ENCODE measurements at regions of chr10 and their contacts with region 1.

Region 1: DNA sequence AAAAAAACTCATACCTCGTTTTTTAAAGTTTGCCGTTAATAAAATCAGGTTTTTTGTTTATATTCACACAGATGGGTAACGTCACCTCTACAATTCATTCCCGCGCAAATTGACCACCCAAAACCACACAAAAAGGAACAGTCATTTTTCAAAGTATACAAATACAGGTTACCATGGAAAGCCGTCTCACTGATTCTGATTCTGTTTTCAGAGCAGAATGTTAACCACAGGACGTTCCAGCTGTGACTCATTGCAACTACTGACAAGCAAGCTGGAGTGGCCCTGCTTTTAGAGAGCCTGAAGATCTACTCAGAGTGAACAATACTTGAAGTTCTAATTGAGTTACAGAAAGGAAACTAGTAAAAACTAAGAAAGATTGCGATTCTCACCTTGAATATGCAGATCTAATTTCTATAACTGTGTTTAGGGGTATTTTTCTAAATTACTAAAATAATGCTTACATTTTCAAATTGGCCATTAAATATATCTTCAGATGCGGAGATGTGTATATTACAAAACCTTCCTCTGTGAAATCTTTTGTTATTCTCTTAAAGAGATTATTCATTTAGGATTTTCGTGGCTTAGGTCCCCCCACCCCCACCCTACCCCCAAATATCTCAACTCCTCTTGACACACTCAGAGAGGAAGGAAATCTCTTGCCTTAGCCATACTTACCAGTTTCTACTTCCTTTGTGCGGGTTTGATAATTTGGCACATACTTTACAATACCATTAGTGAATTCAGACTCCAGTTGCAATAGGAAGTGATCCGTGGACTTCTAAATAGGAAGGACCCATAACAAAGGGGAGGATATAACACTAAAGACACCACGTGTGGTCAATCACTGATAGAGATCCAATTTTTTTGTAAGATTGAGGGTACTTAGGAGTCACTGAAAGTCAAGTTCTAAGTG is 106.0 kb downstream of the CUBN start:
- DNase-seq: peak in 8 of 9 donors; percentile 60 to 89 (median 78)
- ATAC-seq: peak; percentile 86
- H3K4me3 ChIP-seq: no peak overlapping the region
- H3K4me3 Mint-ChIP-seq: peak overlapping the region; percentile 5 to 89 (median 64)
- H3K27ac ChIP-seq: peak overlapping the region; percentile 82
- H3K27ac Mint-ChIP-seq: peak overlapping the region; percentile 74 to 99 (median 91)
- H3K4me1 ChIP-seq: peaks cover 46 to 59% of the 10 kb centered on the region in 2 donors
- H3K4me1 Mint-ChIP-seq: peaks cover 32 to 72% (median 67%) of the 10 kb centered on the region in 7 donors
- H3K27me3 ChIP-seq: no peaks in the 10 kb centered on the region
- H3K27me3 Mint-ChIP-seq: peaks cover 0 to 9% (median 0%) of the 10 kb centered on the region in 5 donors

Region 2: DNA sequence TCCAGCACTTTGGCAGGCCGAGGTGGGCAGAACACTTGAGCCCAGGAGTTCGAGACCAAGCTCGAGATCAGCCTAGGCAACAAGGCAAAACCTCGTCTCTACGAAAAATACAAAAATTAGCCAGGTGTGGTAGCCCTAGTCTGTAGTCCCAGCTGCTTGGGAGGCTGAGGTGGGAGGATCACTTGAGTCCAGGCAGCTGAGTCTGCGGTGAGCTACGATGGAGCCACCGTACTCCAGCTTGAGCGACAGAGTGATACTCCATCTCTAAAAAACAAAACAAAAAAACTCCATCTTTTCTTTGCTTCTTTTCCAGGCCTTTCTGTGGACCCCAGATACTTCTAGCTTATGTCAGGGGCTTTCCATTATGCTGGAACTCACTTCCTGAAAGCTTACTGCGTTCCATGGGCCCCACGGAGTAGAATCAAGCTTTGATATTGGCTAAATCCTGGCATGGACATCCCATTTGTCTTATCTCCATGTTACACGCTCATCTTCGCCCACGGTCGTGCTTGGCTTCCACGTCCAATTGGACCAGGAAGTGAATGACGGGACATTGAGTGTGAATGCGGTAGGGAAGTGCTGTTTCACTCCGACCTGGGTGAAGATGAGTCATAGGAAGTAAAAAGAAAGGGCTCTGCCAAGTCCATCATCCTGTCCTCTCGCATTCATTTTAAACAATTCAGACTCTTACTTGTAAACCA is 1698.2 kb before region 1 on chr10:
- CTCF ChIA-PET with region 1: no interaction called
- POLR2A ChIA-PET with region 1: no interaction called
- intact Hi-C with region 1: no loop called
- DNase-seq: no peak
- ATAC-seq: no peak
- H3K4me3 ChIP-seq: no peak overlapping the region
- H3K4me3 Mint-ChIP-seq: no peak overlapping the region
- H3K27ac ChIP-seq: no peak overlapping the region
- H3K27ac Mint-ChIP-seq: no peak overlapping the region
- H3K4me1 ChIP-seq: no peaks in the 10 kb centered on the region
- H3K4me1 Mint-ChIP-seq: peaks cover 0 to 6% (median 0%) of the 10 kb centered on the region in 7 donors
- H3K27me3 ChIP-seq: no peaks in the 10 kb centered on the region
- H3K27me3 Mint-ChIP-seq: peaks cover 0 to 6% (median 0%) of the 10 kb centered on the region in 5 donors

Region 3: GRCh38 chr10:16904639-16905061 is 119.0 kb before region 1 on chr10:
- CTCF ChIA-PET with region 1: no interaction called
- POLR2A ChIA-PET with region 1: no interaction called
- intact Hi-C with region 1: loop called in 1 of 2 experiments (anchors 2 kb)
- DNase-seq: no peak
- ATAC-seq: no peak
- H3K4me3 ChIP-seq: no peak overlapping the region
- H3K4me3 Mint-ChIP-seq: no peak overlapping the region
- H3K27ac ChIP-seq: no peak overlapping the region
- H3K27ac Mint-ChIP-seq: no peak overlapping the region
- H3K4me1 ChIP-seq: no peaks in the 10 kb centered on the region
- H3K4me1 Mint-ChIP-seq: peaks cover 0 to 7% (median 4%) of the 10 kb centered on the region in 7 donors
- H3K27me3 ChIP-seq: no peaks in the 10 kb centered on the region
- H3K27me3 Mint-ChIP-seq: peaks cover 0 to 7% (median 0%) of the 10 kb centered on the region in 5 donors

Region 4: DNA sequence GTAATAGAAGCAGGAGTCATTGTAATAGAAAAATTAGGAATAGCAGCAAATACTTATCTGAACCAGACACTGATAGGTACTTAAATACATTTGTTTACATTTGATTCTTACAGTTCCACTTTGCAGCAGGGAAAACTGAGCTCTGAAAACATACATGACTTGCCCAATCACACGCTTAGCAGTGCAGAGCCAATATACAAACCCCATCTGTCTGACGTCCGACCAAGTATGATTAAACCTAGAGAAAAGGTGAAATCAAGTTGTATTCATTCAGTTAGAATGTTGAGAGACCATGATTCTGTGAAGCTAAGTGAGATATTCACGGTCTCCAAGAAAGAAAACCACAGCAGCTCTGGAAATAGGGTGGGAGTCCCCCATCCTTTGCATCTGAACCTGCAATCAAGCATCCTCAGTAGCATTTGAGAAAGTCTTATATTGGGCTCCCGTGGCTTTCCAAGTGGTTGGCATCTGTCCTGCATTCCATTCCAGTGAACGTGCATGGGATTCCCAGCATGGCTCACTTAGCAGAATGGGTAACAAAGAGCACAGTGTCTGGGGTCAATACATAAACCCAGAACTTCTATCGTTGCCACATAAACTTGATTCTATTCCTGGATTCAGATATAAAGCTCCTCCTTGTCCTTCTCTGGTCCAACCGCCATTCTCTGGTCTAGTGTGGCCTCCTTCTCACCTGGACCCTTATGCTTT is 57.7 kb before region 1 on chr10:
- CTCF ChIA-PET with region 1: no interaction called
- POLR2A ChIA-PET with region 1: no interaction called
- intact Hi-C with region 1: loop called in 1 of 2 experiments (anchors 2 kb)
- DNase-seq: no peak
- ATAC-seq: no peak
- H3K4me3 ChIP-seq: no peak overlapping the region
- H3K4me3 Mint-ChIP-seq: no peak overlapping the region
- H3K27ac ChIP-seq: no peak overlapping the region
- H3K27ac Mint-ChIP-seq: no peak overlapping the region
- H3K4me1 ChIP-seq: no peaks in the 10 kb centered on the region
- H3K4me1 Mint-ChIP-seq: peaks cover 12 to 27% (median 17%) of the 10 kb centered on the region in 7 donors
- H3K27me3 ChIP-seq: no peaks in the 10 kb centered on the region
- H3K27me3 Mint-ChIP-seq: peaks cover 0 to 17% (median 0%) of the 10 kb centered on the region in 5 donors

Region 5: GRCh38 chr10:17001961-17002749 is 21.5 kb before region 1 on chr10:
- CTCF ChIA-PET with region 1: no interaction called
- POLR2A ChIA-PET with region 1: interaction called, 6 read pairs
- intact Hi-C with region 1: loop called (anchors 1 kb)
- DNase-seq: peak in 5 of 9 donors; percentile 25 to 79 (median 38)
- ATAC-seq: peak; percentile 59
- H3K4me3 ChIP-seq: no peak overlapping the region
- H3K4me3 Mint-ChIP-seq: peak overlapping the region in 9 of 10 donors; percentile 30 to 69 (median 63)
- H3K27ac ChIP-seq: peak overlapping the region; percentile 67
- H3K27ac Mint-ChIP-seq: peak overlapping the region; percentile 65 to 98 (median 85)
- H3K4me1 ChIP-seq: peaks cover 20 to 35% of the 10 kb centered on the region in 2 donors
- H3K4me1 Mint-ChIP-seq: peaks cover 21 to 79% (median 57%) of the 10 kb centered on the region in 7 donors
- H3K27me3 ChIP-seq: no peaks in the 10 kb centered on the region
- H3K27me3 Mint-ChIP-seq: peaks cover 0 to 66% (median 0%) of the 10 kb centered on the region in 5 donors

Region 6: GRCh38 chr10:17144757-17145156 is 121.1 kb after region 1 on chr10:
- CTCF ChIA-PET with region 1: no interaction called
- POLR2A ChIA-PET with region 1: no interaction called
- intact Hi-C with region 1: loop called in 1 of 2 experiments (anchors 1 kb)
- DNase-seq: peak in 1 of 9 donors; percentile 56
- ATAC-seq: no peak
- H3K4me3 ChIP-seq: no peak overlapping the region
- H3K4me3 Mint-ChIP-seq: peak overlapping the region in 1 of 10 donors; percentile 46
- H3K27ac ChIP-seq: no peak overlapping the region
- H3K27ac Mint-ChIP-seq: peak overlapping the region in 4 of 9 donors; percentile 34 to 82 (median 74)
- H3K4me1 ChIP-seq: peaks cover 0 to 5% of the 10 kb centered on the region in 2 donors
- H3K4me1 Mint-ChIP-seq: peaks cover 4 to 32% (median 22%) of the 10 kb centered on the region in 7 donors
- H3K27me3 ChIP-seq: no peaks in the 10 kb centered on the region
- H3K27me3 Mint-ChIP-seq: peaks cover 0 to 2% (median 0%) of the 10 kb centered on the region in 5 donors

Region 7: GRCh38 chr10:17216217-17216900 is 192.7 kb after region 1 on chr10:
- CTCF ChIA-PET with region 1: no interaction called
- POLR2A ChIA-PET with region 1: no interaction called
- intact Hi-C with region 1: loop called in 1 of 2 experiments (anchors 1 kb)
- DNase-seq: no peak
- ATAC-seq: peak; percentile 91
- H3K4me3 ChIP-seq: no peak overlapping the region
- H3K4me3 Mint-ChIP-seq: peak overlapping the region in 2 of 10 donors; percentile 36 to 39
- H3K27ac ChIP-seq: no peak overlapping the region
- H3K27ac Mint-ChIP-seq: peak overlapping the region in 5 of 9 donors; percentile 32 to 95 (median 50)
- H3K4me1 ChIP-seq: peaks cover 5 to 11% of the 10 kb centered on the region in 2 donors
- H3K4me1 Mint-ChIP-seq: peaks cover 0 to 47% (median 5%) of the 10 kb centered on the region in 7 donors
- H3K27me3 ChIP-seq: no peaks in the 10 kb centered on the region
- H3K27me3 Mint-ChIP-seq: no peaks in the 10 kb centered on the region

Region 8: GRCh38 chr10:18659120-18659818 is 1635.6 kb after region 1 on chr10 and contains the start of gene ARL5B:
- CTCF ChIA-PET with region 1: no interaction called
- POLR2A ChIA-PET with region 1: no interaction called
- intact Hi-C with region 1: loop called (anchors 10 kb)
- DNase-seq: peak; percentile 82 to 97 (median 93)
- ATAC-seq: peak; percentile 98
- H3K4me3 ChIP-seq: peak within 1 kb of the TSS; percentile 89
- H3K4me3 Mint-ChIP-seq: peak within 1 kb of the TSS; percentile 94 to 100 (median 99)
- H3K27ac ChIP-seq: peak within 1 kb of the TSS; percentile 92
- H3K27ac Mint-ChIP-seq: peak within 1 kb of the TSS; percentile 95 to 99 (median 99)
- H3K4me1 ChIP-seq: peaks cover 16 to 21% of the 10 kb centered on the region in 2 donors
- H3K4me1 Mint-ChIP-seq: peaks cover 28 to 56% (median 44%) of the 10 kb centered on the region in 7 donors
- H3K27me3 ChIP-seq: no peaks in the 10 kb centered on the region
- H3K27me3 Mint-ChIP-seq: no peaks in the 10 kb centered on the region
- total RNA-seq, gene ARL5B: 9.7 to 15.8 (median 13.9) TPM

Measured in naive thymus-derived CD4-positive, alpha-beta T cell (primary cell).